ENCODE measurements at regions of chr13 and their contacts with region 1.

Region 1: DNA sequence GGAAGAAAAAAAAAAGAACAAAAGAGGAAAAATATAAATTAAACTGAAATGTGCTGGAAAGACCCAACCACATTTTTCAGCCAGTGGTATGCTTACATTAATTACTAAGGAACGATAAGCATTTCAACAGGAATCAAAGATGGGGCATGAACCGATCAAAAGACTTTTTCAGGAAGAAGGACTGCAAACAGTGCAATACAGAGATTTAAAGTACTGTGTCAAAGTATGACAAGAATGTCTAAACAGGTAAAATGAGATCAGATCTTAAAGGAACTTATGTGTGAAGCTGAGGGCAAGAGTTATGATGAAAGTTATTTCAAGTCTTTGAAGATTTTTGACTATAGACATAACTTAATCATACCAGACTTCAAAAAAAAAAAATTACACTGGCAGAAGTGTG is 1761.8 kb downstream of the SLITRK5 start:
- DNase-seq: no peak
- H3K4me3 ChIP-seq: no peak overlapping the region
- H3K27ac ChIP-seq: no peak overlapping the region
- H3K4me1 ChIP-seq: no peaks in the 10 kb centered on the region
- H3K27me3 ChIP-seq: no peaks in the 10 kb centered on the region
- CTCF ChIP-seq: no peak

Region 2: DNA sequence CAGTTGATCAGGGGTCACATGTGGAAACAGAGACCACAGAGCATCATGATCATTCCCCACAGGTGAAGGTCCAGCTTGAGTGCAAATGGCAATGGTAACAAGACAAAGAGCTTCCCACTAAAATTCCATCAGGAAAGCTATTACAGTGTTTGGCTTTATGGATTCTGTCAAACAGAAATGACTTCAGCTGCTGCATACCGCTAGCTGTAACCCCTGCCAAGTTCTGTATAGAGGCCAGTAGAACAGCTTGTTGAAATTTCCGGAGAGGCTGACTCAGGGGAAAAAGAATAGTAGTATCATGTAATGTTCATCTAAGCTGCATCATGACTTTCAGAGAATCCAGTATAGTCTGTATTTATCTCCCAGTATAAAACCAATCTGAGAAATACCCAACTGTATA is 57.2 kb before region 1 on chr13:
- CTCF ChIA-PET with region 1: no interaction called
- POLR2A ChIA-PET with region 1: no interaction called
- intact Hi-C with region 1: no loop called
- DNase-seq: peak; percentile 35
- H3K4me3 ChIP-seq: no peak overlapping the region
- H3K27ac ChIP-seq: no peak overlapping the region
- H3K4me1 ChIP-seq: no peaks in the 10 kb centered on the region
- H3K27me3 ChIP-seq: no peaks in the 10 kb centered on the region
- CTCF ChIP-seq: no peak

Region 3: GRCh38 chr13:89660752-89661151 is 227.8 kb after region 1 on chr13:
- CTCF ChIA-PET with region 1: no interaction called
- POLR2A ChIA-PET with region 1: no interaction called
- intact Hi-C with region 1: no loop called
- DNase-seq: no peak
- H3K4me3 ChIP-seq: no peak overlapping the region
- H3K27ac ChIP-seq: no peak overlapping the region
- H3K4me1 ChIP-seq: no peaks in the 10 kb centered on the region
- H3K27me3 ChIP-seq: no peaks in the 10 kb centered on the region
- CTCF ChIP-seq: no peak

Region 4: DNA sequence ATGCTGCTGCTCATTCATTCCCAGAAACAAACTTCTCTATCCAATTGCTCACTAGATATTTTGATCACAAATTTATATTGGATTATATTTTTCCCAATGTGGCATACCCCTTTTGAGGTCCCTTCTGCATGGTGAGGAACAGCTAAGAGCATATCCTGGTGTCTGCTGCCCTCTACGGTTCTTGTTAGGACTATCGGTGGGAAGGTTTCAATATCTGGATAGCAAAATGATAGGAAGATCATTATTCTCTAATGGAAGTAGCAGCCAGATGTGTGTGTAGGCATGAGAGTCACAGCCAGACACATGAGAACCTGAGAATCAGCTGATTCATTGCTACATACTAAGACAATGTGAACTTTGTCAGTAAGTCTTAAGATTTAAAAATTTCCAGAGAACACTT is 492.1 kb after region 1 on chr13:
- CTCF ChIA-PET with region 1: no interaction called
- POLR2A ChIA-PET with region 1: no interaction called
- intact Hi-C with region 1: loop called (anchors 10 kb)
- DNase-seq: peak; percentile 55
- H3K4me3 ChIP-seq: no peak overlapping the region
- H3K27ac ChIP-seq: no peak overlapping the region
- H3K4me1 ChIP-seq: no peaks in the 10 kb centered on the region
- H3K27me3 ChIP-seq: no peaks in the 10 kb centered on the region
- CTCF ChIP-seq: peak; percentile 68